ENCODE measurements at regions of chr3 and their contacts with region 1.

Region 1: GRCh38 chr3:55333923-55334322 is 153.2 kb downstream of the WNT5A start:
- DNase-seq: no peak
- H3K4me3 ChIP-seq: no peak overlapping the region
- H3K27ac ChIP-seq: no peak overlapping the region
- H3K4me1 ChIP-seq: no peaks in the 10 kb centered on the region
- H3K27me3 ChIP-seq: no peaks in the 10 kb centered on the region
- CTCF ChIP-seq: no peak
- POLR2A ChIP-seq: no peak

Region 2: DNA sequence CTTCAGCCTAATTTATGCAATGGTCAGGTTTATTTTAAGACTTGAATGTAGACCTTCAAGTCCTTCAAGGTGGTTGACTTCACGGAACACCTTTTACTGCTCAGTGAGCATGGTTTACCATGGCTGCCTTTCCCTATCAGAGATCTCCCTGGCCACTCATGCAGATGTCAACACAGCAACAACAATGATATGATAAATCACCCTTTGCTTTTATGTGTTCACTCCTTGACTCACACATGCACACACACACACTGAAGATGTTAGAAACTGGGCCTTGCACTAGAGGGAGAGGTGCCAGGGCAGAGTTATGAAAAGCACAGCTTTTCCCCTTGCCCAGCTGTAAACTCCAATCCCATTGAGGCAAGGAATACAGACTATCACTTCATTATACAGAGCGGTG is 18.7 kb after region 1 on chr3:
- intact Hi-C with region 1: loop called (anchors 1 kb)
- DNase-seq: no peak
- H3K4me3 ChIP-seq: no peak overlapping the region
- H3K27ac ChIP-seq: no peak overlapping the region
- H3K4me1 ChIP-seq: no peaks in the 10 kb centered on the region
- H3K27me3 ChIP-seq: no peaks in the 10 kb centered on the region
- CTCF ChIP-seq: no peak
- POLR2A ChIP-seq: no peak

Region 3: DNA sequence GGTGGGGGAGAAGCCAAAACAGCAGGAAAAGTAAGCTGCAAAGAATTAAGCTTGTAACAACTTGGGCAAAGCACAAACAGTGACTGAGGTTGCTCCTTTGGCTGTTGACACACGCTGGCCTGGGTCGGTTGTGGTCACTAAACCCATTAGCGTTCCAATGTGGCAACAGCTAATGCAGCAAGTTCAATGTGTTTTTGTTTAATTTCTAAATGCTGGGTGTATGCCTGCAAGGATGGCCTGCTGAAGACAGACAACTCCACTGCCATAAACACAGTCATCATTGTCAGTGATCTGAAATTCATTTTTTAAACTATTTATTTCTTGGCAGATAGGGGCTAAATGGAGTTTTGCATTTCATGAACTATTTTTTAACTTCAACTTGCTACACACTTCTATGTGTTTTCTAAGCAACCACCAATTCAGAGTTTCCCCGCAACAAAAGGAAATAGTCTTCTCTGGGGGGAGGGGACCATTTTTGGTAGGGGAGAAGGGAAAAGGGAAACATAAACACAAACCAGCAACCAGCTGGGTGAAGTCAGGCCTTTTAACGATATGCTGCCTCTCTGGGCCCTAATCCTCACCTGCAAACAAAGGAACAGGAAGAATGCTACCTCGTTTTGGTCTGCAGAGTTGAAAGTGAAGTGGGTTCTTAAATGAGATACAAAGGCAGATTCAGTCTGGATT is 188.0 kb after region 1 on chr3:
- intact Hi-C with region 1: no loop called
- DNase-seq: peak in 1 of 2 donors; percentile 56
- H3K4me3 ChIP-seq: no peak overlapping the region
- H3K27ac ChIP-seq: no peak overlapping the region
- H3K4me1 ChIP-seq: peaks cover 0 to 11% of the 10 kb centered on the region in 2 donors
- H3K27me3 ChIP-seq: peaks cover 0 to 4% of the 10 kb centered on the region in 2 donors
- CTCF ChIP-seq: no peak
- POLR2A ChIP-seq: no peak

Region 4: GRCh38 chr3:56566101-56566500 is 1232.2 kb after region 1 on chr3:
- intact Hi-C with region 1: no loop called
- DNase-seq: no peak
- H3K4me3 ChIP-seq: no peak overlapping the region
- H3K27ac ChIP-seq: no peak overlapping the region
- H3K4me1 ChIP-seq: no peaks in the 10 kb centered on the region
- H3K27me3 ChIP-seq: no peaks in the 10 kb centered on the region
- CTCF ChIP-seq: no peak
- POLR2A ChIP-seq: no peak

Measured in breast epithelium (tissue), 4 donors.